ENCODE measurements at regions of chr14 and their contacts with region 1.

Region 1: GRCh38 chr14:36207500-36207899 is 31.0 kb upstream of the PTCSC3 start:
- DNase-seq: peak; percentile 51
- ATAC-seq: peak; percentile 85
- H3K4me3 ChIP-seq: no peak overlapping the region
- H3K27ac ChIP-seq: no peak overlapping the region
- H3K4me1 ChIP-seq: no peaks in the 10 kb centered on the region
- H3K27me3 ChIP-seq: peaks cover 44% of the 10 kb centered on the region
- CTCF ChIP-seq: peak; percentile 75

Region 2: GRCh38 chr14:36281309-36281708 is 73.8 kb after region 1 on chr14:
- CTCF ChIA-PET with region 1: no interaction called
- POLR2A ChIA-PET with region 1: no interaction called
- intact Hi-C with region 1: loop called (anchors 5 kb)
- DNase-seq: no peak
- ATAC-seq: no peak
- H3K4me3 ChIP-seq: no peak overlapping the region
- H3K27ac ChIP-seq: no peak overlapping the region
- H3K4me1 ChIP-seq: no peaks in the 10 kb centered on the region
- H3K27me3 ChIP-seq: peaks cover 74% of the 10 kb centered on the region
- CTCF ChIP-seq: no peak

Measured in PC-3 (cell line).